Mammary epithelial cell (primary cell): ENCODE measurements at regions of chr7 and their contacts with region 1.

Region 1: GRCh38 chr7:120583899-120584586 is 273.9 kb downstream of the TSPAN12 start:
- DNase-seq: peak; percentile 5
- H3K4me3 ChIP-seq: no peak overlapping the region
- H3K27ac ChIP-seq: no peak overlapping the region
- H3K4me1 ChIP-seq: peaks cover 12% of the 10 kb centered on the region
- H3K27me3 ChIP-seq: no peaks in the 10 kb centered on the region
- CTCF ChIP-seq: no peak

Region 2: DNA sequence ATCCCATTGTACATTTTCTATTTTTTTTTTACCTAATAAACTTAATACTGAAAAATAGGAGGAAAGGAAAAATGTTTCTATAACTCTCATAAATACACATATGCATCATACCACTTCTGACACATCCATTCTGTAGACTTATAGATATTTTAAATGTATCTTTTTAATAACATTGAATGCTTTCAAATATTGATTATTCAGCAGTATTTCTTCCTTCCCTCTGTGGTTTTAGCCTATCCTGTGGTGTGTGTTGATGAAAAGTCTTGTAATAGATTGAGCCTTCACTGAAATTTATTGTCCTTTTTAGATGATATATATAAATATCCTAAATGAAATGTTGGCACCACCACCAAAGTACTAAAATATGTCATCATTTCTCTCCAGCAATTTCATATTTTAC is 55.8 kb after region 1 on chr7:
- CTCF ChIA-PET with region 1: no interaction called
- dilution Hi-C with region 1: no loop called
- in situ Hi-C with region 1: no loop called
- intact Hi-C with region 1: no loop called
- DNase-seq: no peak
- H3K4me3 ChIP-seq: no peak overlapping the region
- H3K27ac ChIP-seq: no peak overlapping the region
- H3K4me1 ChIP-seq: no peaks in the 10 kb centered on the region
- H3K27me3 ChIP-seq: no peaks in the 10 kb centered on the region
- CTCF ChIP-seq: no peak

Region 3: DNA sequence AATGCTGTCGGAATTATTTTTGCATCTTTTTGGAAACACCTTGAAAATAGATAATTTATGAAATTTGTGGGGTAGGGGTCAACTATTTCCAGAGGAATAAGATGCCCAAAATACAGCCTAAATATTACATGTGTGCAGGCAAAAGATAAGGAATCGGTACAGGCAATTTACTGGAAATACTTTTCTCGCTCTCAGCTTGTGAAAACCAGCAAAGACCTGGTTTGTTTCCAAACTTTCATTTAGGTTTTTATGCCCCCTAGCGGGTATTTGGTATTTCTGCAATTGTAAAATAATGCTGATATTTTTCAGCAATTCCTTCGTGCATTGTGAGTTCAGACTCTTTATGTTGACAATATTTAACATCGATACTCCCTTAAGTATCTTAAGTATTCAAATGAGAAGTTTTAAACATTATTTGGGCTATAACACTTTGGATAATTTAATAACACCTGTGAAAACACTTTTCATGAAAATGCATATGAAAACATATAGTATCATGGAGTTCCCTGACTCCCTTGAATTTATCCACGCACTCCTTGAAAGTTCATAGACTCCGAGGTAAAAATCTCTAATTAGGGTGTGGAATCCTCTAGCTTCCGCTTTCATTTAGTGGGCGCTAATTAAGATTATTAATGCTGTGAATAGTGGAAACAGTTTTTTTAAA is 141.5 kb after region 1 on chr7:
- CTCF ChIA-PET with region 1: no interaction called
- dilution Hi-C with region 1: no loop called
- in situ Hi-C with region 1: no loop called
- intact Hi-C with region 1: loop called (anchors 10 kb)
- DNase-seq: no peak
- H3K4me3 ChIP-seq: no peak overlapping the region
- H3K27ac ChIP-seq: no peak overlapping the region
- H3K4me1 ChIP-seq: no peaks in the 10 kb centered on the region
- H3K27me3 ChIP-seq: no peaks in the 10 kb centered on the region
- CTCF ChIP-seq: peak; percentile 58 to 61